ENCODE measurements at regions of chr19 and their contacts with region 1.

Region 1: DNA sequence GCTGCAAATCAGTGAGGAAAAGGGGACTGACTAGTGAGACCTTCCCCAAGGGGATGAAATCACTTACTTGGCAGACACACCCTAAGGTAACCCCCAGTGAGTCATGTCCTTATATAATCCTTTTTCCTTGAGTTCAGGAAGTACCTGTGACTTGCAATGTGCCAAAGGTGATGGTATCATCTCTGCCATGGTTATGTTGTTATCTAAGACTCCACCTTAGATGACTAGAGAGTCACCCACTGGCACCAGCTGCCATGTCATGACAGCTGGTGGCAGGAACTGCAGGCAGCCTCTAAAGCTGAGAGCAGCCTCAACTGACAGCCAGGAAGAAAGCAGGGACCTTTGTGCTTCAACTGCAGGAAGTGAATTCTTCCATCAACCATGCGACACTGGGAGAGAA is 12.5 kb downstream of the PBX4 start:
- DNase-seq: peak; percentile 61 to 91 (median 73)
- H3K4me3 ChIP-seq: no peak overlapping the region
- H3K4me3 Mint-ChIP-seq: peak overlapping the region; percentile 22 to 90 (median 74)
- H3K27ac ChIP-seq: peak overlapping the region; percentile 69
- H3K27ac Mint-ChIP-seq: peak overlapping the region; percentile 95 to 99 (median 97)
- H3K4me1 ChIP-seq: peaks cover 57% of the 10 kb centered on the region
- H3K4me1 Mint-ChIP-seq: peaks cover 46 to 69% (median 58%) of the 10 kb centered on the region in 4 donors
- H3K27me3 ChIP-seq: no peaks in the 10 kb centered on the region
- H3K27me3 Mint-ChIP-seq: no peaks in the 10 kb centered on the region

Region 2: DNA sequence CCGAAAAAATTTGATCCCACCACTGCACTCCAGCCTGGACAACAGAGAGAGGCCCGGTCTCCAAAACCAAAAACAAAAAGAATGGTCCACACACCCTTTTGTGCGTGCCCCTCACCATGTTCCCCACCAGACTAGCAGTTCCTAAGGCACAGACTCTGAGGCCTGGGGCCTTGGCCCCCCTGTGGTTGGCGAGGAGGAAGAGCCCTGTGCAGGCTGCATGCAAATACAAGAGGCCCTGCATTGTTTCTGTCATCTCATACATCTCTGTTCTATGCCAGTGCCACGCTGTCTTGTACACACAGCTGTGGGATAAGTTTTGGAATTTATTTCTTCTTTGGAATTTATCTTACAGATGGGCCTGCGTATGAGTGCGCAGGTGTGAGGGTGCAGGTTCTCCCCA is 82.0 kb before region 1 on chr19:
- CTCF ChIA-PET with region 1: no interaction called
- POLR2A ChIA-PET with region 1: no interaction called
- intact Hi-C with region 1: no loop called
- DNase-seq: no peak
- H3K4me3 ChIP-seq: no peak overlapping the region
- H3K4me3 Mint-ChIP-seq: no peak overlapping the region
- H3K27ac ChIP-seq: no peak overlapping the region
- H3K27ac Mint-ChIP-seq: peak overlapping the region in 2 of 7 donors; percentile 32 to 64
- H3K4me1 ChIP-seq: peaks cover 7% of the 10 kb centered on the region
- H3K4me1 Mint-ChIP-seq: peaks cover 11 to 28% (median 20%) of the 10 kb centered on the region in 4 donors
- H3K27me3 ChIP-seq: no peaks in the 10 kb centered on the region
- H3K27me3 Mint-ChIP-seq: no peaks in the 10 kb centered on the region

Region 3: DNA sequence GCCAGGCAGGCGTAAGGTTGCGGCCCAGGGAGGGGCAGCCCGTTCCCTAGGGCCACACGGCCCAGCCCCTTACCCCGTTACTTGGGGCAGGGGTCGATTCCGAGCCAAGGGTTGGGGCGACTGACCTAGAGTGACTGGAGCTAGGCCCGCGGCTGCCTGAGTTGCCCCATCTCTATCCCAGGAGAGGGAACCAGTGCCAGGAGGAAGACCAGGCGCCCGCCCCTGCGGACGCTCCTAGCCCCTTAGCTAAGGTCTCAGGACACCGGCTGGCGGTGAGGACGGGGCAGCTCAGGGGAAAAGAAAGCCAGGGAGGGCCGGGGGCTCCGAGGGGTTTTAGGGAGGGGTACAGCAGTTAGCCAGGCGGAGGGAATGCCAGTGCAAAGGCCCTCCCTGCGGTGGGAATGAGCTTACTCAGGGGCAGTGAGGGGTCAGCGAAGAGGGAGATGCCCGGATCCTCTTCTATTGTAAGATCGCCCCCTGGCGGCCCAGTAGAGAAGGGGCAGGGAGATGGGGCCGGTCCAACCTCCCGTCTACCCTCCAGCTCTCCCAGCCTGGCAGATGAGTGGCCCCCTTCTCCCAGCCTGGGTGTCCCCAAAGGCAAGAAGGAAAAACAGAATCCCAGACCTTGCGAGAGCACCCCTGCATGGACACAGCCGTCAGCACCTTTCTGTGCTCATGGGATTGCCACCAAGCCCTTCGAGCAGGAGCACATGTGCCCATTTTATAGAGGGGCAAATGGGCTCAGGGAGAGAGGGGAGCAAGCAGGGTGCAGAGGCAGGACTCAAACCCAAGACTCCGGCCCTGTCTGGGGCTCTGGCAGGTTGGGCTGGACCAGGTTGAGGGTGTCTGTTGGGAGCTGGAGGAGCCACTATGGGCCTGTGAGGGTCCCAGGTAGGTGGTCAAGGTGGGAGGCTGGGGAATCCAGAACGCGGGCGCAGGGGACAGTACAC is 51.7 kb before region 1 on chr19:
- CTCF ChIA-PET with region 1: interaction called, 17 read pairs
- POLR2A ChIA-PET with region 1: interaction called, 5 read pairs
- intact Hi-C with region 1: no loop called
- DNase-seq: peak; percentile 42 to 50 (median 45)
- H3K4me3 ChIP-seq: no peak overlapping the region
- H3K4me3 Mint-ChIP-seq: peak overlapping the region in 1 of 8 donors; percentile 10
- H3K27ac ChIP-seq: no peak overlapping the region
- H3K27ac Mint-ChIP-seq: peak overlapping the region in 1 of 7 donors; percentile 40
- H3K4me1 ChIP-seq: peaks cover 6% of the 10 kb centered on the region
- H3K4me1 Mint-ChIP-seq: peaks cover 10 to 17% (median 12%) of the 10 kb centered on the region in 4 donors
- H3K27me3 ChIP-seq: no peaks in the 10 kb centered on the region
- H3K27me3 Mint-ChIP-seq: no peaks in the 10 kb centered on the region

Region 4: GRCh38 chr19:19591133-19591825 is 14.7 kb before region 1 on chr19:
- CTCF ChIA-PET with region 1: interaction called, 22 read pairs
- POLR2A ChIA-PET with region 1: interaction called, 63 read pairs
- intact Hi-C with region 1: loop called (anchors 2 kb)
- DNase-seq: peak; percentile 63 to 96 (median 69)
- H3K4me3 ChIP-seq: no peak overlapping the region
- H3K4me3 Mint-ChIP-seq: peak overlapping the region in 7 of 8 donors; percentile 28 to 88 (median 62)
- H3K27ac ChIP-seq: peak overlapping the region; percentile 90
- H3K27ac Mint-ChIP-seq: peak overlapping the region; percentile 92 to 98 (median 96)
- H3K4me1 ChIP-seq: peaks cover 71% of the 10 kb centered on the region
- H3K4me1 Mint-ChIP-seq: peaks cover 30 to 74% (median 52%) of the 10 kb centered on the region in 4 donors
- H3K27me3 ChIP-seq: no peaks in the 10 kb centered on the region
- H3K27me3 Mint-ChIP-seq: no peaks in the 10 kb centered on the region

Region 5: DNA sequence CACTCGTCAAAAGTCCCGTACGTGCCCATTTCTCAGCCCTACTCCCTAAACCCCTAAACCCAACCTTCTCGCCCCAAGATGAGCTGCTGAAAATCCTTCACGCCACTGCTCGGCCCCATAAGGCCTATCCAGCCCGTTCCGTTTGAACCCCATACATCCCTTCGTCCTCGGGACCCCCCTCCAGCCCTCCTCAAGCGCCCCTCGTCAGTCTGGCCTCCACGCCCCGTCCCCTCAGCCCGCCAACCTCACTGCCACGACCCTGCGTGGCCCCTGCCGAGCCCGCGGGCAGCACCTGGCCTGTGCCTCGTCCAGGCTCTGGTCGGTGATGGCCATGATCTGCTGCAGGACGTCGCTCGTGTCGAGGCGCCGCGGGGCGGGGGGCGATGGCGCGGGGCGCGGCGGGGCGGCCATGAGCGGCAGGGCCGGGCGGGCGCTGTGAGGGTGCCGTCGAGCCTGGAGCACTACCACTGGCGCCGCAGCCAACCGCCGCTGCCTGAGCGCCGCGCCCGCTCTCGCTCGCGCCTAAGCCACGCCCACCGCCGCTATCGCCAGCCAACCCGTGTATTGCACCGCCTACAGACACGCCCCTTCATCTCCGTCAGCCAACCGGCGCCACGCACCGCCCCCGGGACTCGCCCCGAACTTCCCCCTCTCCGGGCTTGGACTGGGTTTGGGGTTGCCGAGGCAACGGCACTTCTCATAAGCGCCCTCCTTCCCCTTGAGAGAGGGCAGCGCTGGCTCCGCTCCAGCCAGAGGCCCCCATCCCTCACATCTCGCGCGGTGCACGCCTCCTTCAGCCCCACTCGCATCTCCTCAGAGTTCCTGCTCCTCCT is 12.4 kb after region 1 on chr19 and contains the start of gene PBX4:
- CTCF ChIA-PET with region 1: interaction called, 4 read pairs
- POLR2A ChIA-PET with region 1: interaction called, 56 read pairs
- intact Hi-C with region 1: loop called (anchors 1 kb)
- DNase-seq: peak; percentile 99
- H3K4me3 ChIP-seq: peak within 1 kb of the TSS; percentile 71 to 86
- H3K4me3 Mint-ChIP-seq: peak within 1 kb of the TSS; percentile 90 to 98 (median 94)
- H3K27ac ChIP-seq: peak within 1 kb of the TSS; percentile 93
- H3K27ac Mint-ChIP-seq: peak within 1 kb of the TSS; percentile 86 to 99 (median 97)
- H3K4me1 ChIP-seq: peaks cover 53% of the 10 kb centered on the region
- H3K4me1 Mint-ChIP-seq: peaks cover 33 to 49% (median 40%) of the 10 kb centered on the region in 4 donors
- H3K27me3 ChIP-seq: no peaks in the 10 kb centered on the region
- H3K27me3 Mint-ChIP-seq: no peaks in the 10 kb centered on the region
- total RNA-seq, gene PBX4: 46.5 to 56.3 TPM

Region 6: DNA sequence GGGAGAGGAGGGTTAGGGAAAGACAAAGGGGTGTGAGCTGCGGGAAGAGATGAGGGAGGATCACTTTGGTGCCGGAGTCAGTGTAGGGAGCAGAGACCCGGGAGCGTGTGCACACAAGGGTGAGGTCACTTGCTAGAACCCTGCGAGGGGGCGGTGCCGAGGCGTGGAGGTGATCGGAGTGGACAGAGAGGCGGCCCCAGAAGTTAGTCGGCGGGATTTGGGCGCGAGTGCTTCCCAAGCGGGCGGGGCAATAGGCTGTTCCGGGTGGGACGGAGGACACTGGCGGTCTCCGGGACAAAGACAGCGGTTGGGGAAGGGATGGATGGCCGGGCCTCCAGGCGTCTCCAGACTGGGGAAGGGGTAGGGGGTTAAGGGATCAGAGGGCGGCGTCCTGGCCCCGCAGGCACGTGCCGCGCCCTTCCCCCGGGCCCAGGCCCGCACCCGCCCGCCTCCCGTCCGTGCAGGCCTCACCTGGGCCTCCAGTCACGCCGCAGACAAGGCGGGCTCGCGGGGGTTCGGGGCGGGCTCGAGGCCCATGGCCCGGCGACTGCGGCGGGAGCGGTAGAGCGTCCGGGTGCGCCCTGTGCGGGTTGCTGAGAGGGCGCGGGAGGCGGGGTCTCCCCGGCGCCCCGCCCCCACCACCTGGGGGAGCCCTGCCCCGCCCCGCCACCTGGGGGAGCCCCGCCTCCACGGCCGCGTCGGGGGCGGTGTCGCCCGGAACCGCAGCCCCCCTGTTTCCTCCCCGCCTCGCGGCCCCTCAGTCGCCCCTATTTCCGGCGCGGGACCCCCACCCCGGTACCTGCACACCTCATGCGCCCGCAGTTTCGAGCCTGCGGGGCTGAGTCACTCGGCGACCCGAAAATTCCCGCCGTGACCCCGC is 21.8 kb after region 1 on chr19 and contains the start of gene LPAR2:
- CTCF ChIA-PET with region 1: interaction called, 3 read pairs
- POLR2A ChIA-PET with region 1: interaction called, 75 read pairs
- intact Hi-C with region 1: no loop called
- DNase-seq: peak; percentile 80 to 87 (median 84)
- H3K4me3 ChIP-seq: peak within 1 kb of the TSS; percentile 68 to 73
- H3K4me3 Mint-ChIP-seq: peak within 1 kb of the TSS; percentile 92 to 99 (median 93)
- H3K27ac ChIP-seq: peak within 1 kb of the TSS; percentile 80
- H3K27ac Mint-ChIP-seq: peak within 1 kb of the TSS; percentile 92 to 98 (median 95)
- H3K4me1 ChIP-seq: peaks cover 22% of the 10 kb centered on the region
- H3K4me1 Mint-ChIP-seq: peaks cover 14 to 36% (median 28%) of the 10 kb centered on the region in 4 donors
- H3K27me3 ChIP-seq: no peaks in the 10 kb centered on the region
- H3K27me3 Mint-ChIP-seq: no peaks in the 10 kb centered on the region
- total RNA-seq, gene LPAR2: 70.7 to 72.4 TPM

Region 7: GRCh38 chr19:19655617-19656343 is 49.8 kb after region 1 on chr19:
- CTCF ChIA-PET with region 1: no interaction called
- POLR2A ChIA-PET with region 1: no interaction called
- intact Hi-C with region 1: no loop called
- DNase-seq: peak in 1 of 5 donors; percentile 26
- H3K4me3 ChIP-seq: no peak overlapping the region
- H3K4me3 Mint-ChIP-seq: no peak overlapping the region
- H3K27ac ChIP-seq: no peak overlapping the region
- H3K27ac Mint-ChIP-seq: peak overlapping the region in 1 of 7 donors; percentile 86
- H3K4me1 ChIP-seq: peaks cover 10% of the 10 kb centered on the region
- H3K4me1 Mint-ChIP-seq: peaks cover 0 to 15% (median 4%) of the 10 kb centered on the region in 4 donors
- H3K27me3 ChIP-seq: no peaks in the 10 kb centered on the region
- H3K27me3 Mint-ChIP-seq: no peaks in the 10 kb centered on the region